Transverse colon (tissue), 4 donors: ENCODE measurements at regions of chr17 and their contacts with region 1.

Region 1: DNA sequence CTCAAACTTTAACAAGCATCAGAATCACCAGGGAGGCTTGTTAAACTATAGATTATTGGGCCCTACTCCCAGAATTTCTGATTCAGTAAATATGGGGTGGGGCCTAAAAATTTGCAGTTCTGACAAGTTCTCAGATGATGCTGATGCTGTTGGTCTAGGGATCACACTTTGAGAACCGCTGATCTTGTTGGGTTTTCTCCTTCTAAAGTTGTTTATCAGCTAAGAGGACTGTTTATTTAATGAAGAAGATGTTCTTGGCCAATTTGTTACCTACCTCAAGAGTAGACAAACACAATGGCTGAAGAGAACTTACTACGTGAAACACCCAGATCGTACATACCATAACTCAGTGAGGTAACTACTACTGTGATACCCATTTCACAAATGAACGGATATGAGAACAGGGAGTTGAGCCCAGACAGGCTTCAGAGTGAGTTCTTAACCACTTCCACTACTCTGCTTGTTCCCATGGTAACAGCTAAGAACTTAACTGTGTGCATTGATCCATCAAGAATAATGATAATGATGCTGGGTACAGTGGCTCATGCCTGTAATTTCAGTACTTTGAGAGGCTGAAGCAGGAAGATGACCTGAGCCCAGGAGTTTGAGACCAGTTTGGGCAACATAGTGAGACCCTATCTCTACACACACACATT is 85.3 kb upstream of the NSRP1 start:
- DNase-seq: no peak
- H3K4me3 ChIP-seq: no peak overlapping the region
- H3K27ac ChIP-seq: no peak overlapping the region
- H3K4me1 ChIP-seq: no peaks in the 10 kb centered on the region
- H3K27me3 ChIP-seq: no peaks in the 10 kb centered on the region
- CTCF ChIP-seq: no peak
- EP300 ChIP-seq: no peak
- POLR2A ChIP-seq: no peak

Region 2: DNA sequence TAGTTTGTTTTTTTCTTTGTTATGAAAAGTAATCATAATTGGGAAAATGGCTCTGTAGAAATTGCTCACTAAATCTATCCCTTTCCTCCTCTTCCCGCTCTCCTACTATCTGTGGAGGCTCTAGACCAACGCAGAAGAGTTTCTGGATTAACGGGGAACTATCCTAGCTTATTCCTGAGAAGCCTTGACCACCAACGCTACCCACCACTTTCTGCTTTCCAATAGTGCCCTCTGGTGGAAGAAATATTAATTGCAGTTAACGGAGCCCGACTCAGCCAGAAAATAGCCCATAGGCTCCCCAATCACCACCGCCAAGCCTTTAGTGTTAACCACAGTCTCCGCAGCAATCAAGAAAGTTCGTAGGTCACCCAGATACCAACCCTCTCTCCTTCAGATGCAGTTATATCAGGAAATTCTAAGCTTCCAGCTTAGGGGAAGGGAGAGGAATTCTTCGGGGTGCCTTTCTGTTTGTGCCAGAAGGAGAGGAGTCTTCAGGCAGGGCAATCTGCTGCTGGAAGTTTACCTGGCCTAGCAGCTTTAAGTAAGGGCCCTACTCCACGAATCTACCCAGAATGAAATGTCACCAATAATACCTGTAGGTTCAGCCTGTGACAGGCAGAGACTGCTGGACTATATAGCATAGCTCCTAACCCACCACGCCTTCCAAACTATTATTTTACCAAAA is 62.3 kb after region 1 on chr17:
- in situ Hi-C with region 1: loop called in 1 of 4 experiments (anchors 10 kb)
- intact Hi-C with region 1: no loop called
- DNase-seq: peak; percentile 22
- H3K4me3 ChIP-seq: no peak overlapping the region
- H3K27ac ChIP-seq: no peak overlapping the region
- H3K4me1 ChIP-seq: peaks cover 0 to 8% (median 6%) of the 10 kb centered on the region in 4 donors
- H3K27me3 ChIP-seq: peaks cover 4% of the 10 kb centered on the region
- CTCF ChIP-seq: peak; percentile 76 to 88 (median 85)
- EP300 ChIP-seq: no peak
- POLR2A ChIP-seq: no peak

Region 3: GRCh38 chr17:30117675-30118081 is 86.3 kb after region 1 on chr17:
- in situ Hi-C with region 1: no loop called
- intact Hi-C with region 1: no loop called
- DNase-seq: no peak
- H3K4me3 ChIP-seq: peak overlapping the region in 3 of 4 donors; percentile 68 to 90 (median 77)
- H3K27ac ChIP-seq: peak overlapping the region; percentile 89 to 100 (median 96)
- H3K4me1 ChIP-seq: peaks cover 10 to 47% (median 21%) of the 10 kb centered on the region in 4 donors
- H3K27me3 ChIP-seq: no peaks in the 10 kb centered on the region
- CTCF ChIP-seq: no peak
- EP300 ChIP-seq: no peak
- POLR2A ChIP-seq: no peak

Region 4: GRCh38 chr17:30173649-30174048 is 142.3 kb after region 1 on chr17:
- in situ Hi-C with region 1: no loop called
- intact Hi-C with region 1: no loop called
- DNase-seq: no peak
- H3K4me3 ChIP-seq: no peak overlapping the region
- H3K27ac ChIP-seq: no peak overlapping the region
- H3K4me1 ChIP-seq: peaks cover 0 to 28% (median 4%) of the 10 kb centered on the region in 4 donors
- H3K27me3 ChIP-seq: no peaks in the 10 kb centered on the region
- CTCF ChIP-seq: no peak
- EP300 ChIP-seq: no peak
- POLR2A ChIP-seq: no peak